ENCODE measurements at regions of chr3 and their contacts with region 1.

Region 1: GRCh38 chr3:134197681-134198261 is 52.9 kb downstream of the RYK start:
- DNase-seq: peak; percentile 79
- H3K4me3 ChIP-seq: no peak overlapping the region
- H3K27ac ChIP-seq: no peak overlapping the region
- H3K4me1 ChIP-seq: no peaks in the 10 kb centered on the region
- H3K27me3 ChIP-seq: no peaks in the 10 kb centered on the region
- CTCF ChIP-seq: peak; percentile 78

Region 2: DNA sequence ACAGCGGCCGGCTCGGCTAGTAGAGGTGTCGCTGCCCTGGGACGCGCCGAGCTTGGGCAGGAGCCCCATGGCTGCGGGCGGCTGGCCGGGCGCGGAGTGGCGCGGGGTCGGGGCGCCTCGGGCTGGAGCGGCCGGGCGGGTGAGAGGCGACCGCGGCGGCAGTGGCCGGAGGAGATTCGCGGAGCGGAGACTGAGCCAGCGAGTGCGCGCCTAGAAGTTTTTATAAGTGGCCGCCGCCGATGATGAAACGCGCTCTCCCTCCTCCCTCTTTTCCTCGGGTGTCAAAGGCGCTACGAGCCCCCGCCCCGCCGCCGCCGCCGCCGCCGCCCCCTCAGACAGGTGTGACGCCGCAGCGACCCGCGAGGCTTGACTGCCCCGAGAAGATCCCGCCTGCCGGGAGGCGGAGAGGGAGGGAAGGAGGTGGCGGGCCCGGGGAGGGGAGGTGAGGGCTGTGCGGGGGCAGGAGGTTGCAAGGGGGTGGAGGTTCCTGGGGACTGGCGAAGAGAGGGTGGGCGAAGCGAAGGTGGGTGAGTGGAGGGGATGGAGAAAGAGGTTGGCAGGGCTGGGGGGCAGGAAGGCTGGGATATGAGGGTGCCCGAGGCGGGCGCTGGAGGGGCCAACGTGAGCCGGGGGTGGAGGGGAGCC is 167.9 kb before region 1 on chr3 and contains the start of gene SLCO2A1:
- CTCF ChIA-PET with region 1: no interaction called
- POLR2A ChIA-PET with region 1: no interaction called
- intact Hi-C with region 1: no loop called
- DNase-seq: no peak
- H3K4me3 ChIP-seq: peak within 1 kb of the TSS; percentile 44
- H3K27ac ChIP-seq: no peak within 1 kb of the TSS
- H3K4me1 ChIP-seq: no peaks in the 10 kb centered on the region
- H3K27me3 ChIP-seq: peaks cover 37% of the 10 kb centered on the region
- CTCF ChIP-seq: no peak
- total RNA-seq, gene SLCO2A1: not detected in 2 replicates

Region 3: GRCh38 chr3:134473868-134474546 is 276.2 kb after region 1 on chr3:
- CTCF ChIA-PET with region 1: no interaction called
- POLR2A ChIA-PET with region 1: no interaction called
- intact Hi-C with region 1: loop called (anchors 2 kb)
- DNase-seq: peak; percentile 81
- H3K4me3 ChIP-seq: no peak overlapping the region
- H3K27ac ChIP-seq: no peak overlapping the region
- H3K4me1 ChIP-seq: no peaks in the 10 kb centered on the region
- H3K27me3 ChIP-seq: no peaks in the 10 kb centered on the region
- CTCF ChIP-seq: peak; percentile 81

Measured in A673 (cell line).